Activated CD4-positive, alpha-beta memory T cell treated with anti-CD3 and anti-CD28 coated beads for 36 hours (primary cell): ENCODE measurements at regions of chr3 and their contacts with region 1.

Region 1: GRCh38 chr3:14947886-14948555 is 638 bp downstream of the NR2C2 start:
- DNase-seq: peak; percentile 97
- H3K4me3 Mint-ChIP-seq: peak overlapping the region; percentile 96
- H3K27ac Mint-ChIP-seq: peak overlapping the region; percentile 99
- H3K4me1 Mint-ChIP-seq: peaks cover 50% of the 10 kb centered on the region
- H3K27me3 Mint-ChIP-seq: no peaks in the 10 kb centered on the region

Region 2: GRCh38 chr3:14178247-14179113 is 769.5 kb before region 1 on chr3 and contains the starts of genes LSM3 and XPC:
- CTCF ChIA-PET with region 1: no interaction called
- POLR2A ChIA-PET with region 1: no interaction called
- intact Hi-C with region 1: loop called (anchors 5 kb)
- DNase-seq: peak; percentile 98
- H3K4me3 Mint-ChIP-seq: peak within 1 kb of the TSS; percentile 87
- H3K27ac Mint-ChIP-seq: peak within 1 kb of the TSS; percentile 89
- H3K4me1 Mint-ChIP-seq: peaks cover 63% of the 10 kb centered on the region
- H3K27me3 Mint-ChIP-seq: no peaks in the 10 kb centered on the region
- total RNA-seq, gene LSM3: 22.1 to 22.9 TPM
- total RNA-seq, gene XPC: 27.8 to 31.6 TPM

Region 3: DNA sequence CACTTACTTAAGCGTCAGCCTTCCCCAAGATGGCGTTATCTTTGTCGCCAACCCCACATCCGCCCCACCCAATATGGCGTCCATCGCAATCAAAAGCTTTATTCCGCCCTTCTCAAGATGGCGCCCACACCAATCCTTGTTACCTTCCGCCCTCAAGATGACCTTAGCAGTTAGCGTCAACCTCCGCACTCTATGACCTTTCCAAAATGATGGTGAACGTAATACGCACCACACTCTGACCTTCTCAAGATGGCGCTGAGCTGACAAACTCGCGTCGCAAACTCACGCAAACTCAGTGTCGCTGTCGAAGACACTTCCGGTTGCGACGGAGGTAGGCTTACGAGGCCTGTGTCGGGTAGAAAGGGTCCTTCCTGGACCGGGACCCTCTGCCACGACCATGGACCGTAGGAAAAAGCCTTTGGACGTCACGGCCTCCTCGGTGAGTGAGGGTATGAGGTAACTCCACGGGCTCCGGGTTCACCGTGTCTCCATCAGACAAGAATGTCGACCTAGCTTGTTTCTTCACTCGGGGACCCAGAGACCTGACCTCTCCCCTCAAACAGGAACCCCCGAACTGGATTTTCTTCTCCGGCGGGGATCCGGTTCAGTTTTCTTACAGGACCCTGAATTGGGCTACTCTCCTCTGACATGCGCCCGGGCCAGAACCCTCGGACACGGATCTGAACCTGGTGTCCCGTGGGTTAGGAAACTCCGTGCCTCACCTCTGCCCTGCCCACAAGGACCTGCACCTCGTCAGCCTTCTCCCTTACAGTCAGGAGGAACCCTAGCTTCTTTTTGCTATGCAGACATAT is 296.4 kb before region 1 on chr3 and contains the start of gene CCDC174:
- CTCF ChIA-PET with region 1: no interaction called
- POLR2A ChIA-PET with region 1: interaction called, 8 read pairs
- intact Hi-C with region 1: loop called (anchors 1 kb)
- DNase-seq: peak; percentile 97
- H3K4me3 Mint-ChIP-seq: peak within 1 kb of the TSS; percentile 89
- H3K27ac Mint-ChIP-seq: peak within 1 kb of the TSS; percentile 98
- H3K4me1 Mint-ChIP-seq: peaks cover 35% of the 10 kb centered on the region
- H3K27me3 Mint-ChIP-seq: no peaks in the 10 kb centered on the region
- total RNA-seq, gene CCDC174: 16.6 to 18.6 TPM

Region 4: DNA sequence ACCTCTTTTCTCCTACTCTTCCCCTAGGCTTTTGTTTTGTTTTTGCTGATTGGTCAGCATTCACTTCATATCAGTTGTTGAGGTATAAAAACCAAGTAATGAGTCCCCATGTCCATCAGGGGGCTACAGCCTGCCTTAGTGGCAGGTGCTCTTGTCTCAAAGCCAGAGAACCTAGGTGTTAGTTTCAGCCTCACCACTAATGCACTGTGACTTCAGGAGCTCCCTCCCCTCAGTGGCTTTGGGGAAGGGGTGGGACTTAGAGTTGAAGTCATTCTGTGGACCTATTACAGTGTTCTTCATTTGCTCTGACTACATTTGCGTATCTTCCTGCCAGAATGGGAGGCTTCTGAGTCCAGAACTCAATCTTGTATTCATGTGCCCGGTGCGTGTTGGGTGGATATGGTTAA is 41.0 kb after region 1 on chr3:
- CTCF ChIA-PET with region 1: no interaction called
- POLR2A ChIA-PET with region 1: no interaction called
- intact Hi-C with region 1: no loop called
- DNase-seq: peak; percentile 69
- H3K4me3 Mint-ChIP-seq: no peak overlapping the region
- H3K27ac Mint-ChIP-seq: no peak overlapping the region
- H3K4me1 Mint-ChIP-seq: peaks cover 48% of the 10 kb centered on the region
- H3K27me3 Mint-ChIP-seq: no peaks in the 10 kb centered on the region

Region 5: DNA sequence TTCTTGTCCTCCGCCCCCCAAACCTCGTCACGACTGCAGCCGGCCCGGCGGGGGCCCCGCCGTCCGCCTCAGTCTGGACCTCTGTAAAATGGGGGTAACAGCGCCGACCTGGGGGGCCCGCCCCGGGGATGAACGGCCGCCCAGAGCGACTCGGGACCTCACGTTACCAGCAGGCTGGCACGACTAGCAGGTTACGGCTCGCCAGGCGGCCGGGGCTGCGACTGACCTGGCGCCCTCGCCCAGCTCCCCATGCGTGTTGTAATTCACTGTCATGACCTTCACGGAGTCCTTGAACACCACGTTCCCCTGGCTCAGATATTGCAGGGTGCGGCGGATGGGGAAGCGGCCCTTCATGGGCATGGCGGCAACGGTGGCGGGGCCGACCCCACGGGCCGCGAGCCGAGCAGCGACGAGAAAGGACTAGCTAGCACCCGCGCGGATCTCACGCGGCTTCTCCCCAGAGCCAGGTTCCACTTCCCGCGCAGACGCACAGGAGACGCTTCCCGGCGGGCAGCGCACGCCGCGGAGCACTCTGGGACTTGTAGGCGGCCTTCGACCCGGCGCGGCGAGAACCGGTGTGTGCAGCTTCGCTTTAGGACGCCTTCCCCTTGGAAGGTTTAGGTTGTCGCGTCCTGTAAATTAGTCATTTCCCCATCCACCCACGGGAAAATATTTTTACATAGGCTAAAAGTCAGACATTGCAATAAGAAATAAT is 117.0 kb after region 1 on chr3 and contains the start of gene MRPS25:
- CTCF ChIA-PET with region 1: no interaction called
- POLR2A ChIA-PET with region 1: interaction called, 7 read pairs
- intact Hi-C with region 1: loop called (anchors 1 kb)
- DNase-seq: peak; percentile 95
- H3K4me3 Mint-ChIP-seq: peak within 1 kb of the TSS; percentile 96
- H3K27ac Mint-ChIP-seq: peak within 1 kb of the TSS; percentile 90
- H3K4me1 Mint-ChIP-seq: peaks cover 22% of the 10 kb centered on the region
- H3K27me3 Mint-ChIP-seq: no peaks in the 10 kb centered on the region
- total RNA-seq, gene MRPS25: 53.8 to 58.5 TPM

Region 6: DNA sequence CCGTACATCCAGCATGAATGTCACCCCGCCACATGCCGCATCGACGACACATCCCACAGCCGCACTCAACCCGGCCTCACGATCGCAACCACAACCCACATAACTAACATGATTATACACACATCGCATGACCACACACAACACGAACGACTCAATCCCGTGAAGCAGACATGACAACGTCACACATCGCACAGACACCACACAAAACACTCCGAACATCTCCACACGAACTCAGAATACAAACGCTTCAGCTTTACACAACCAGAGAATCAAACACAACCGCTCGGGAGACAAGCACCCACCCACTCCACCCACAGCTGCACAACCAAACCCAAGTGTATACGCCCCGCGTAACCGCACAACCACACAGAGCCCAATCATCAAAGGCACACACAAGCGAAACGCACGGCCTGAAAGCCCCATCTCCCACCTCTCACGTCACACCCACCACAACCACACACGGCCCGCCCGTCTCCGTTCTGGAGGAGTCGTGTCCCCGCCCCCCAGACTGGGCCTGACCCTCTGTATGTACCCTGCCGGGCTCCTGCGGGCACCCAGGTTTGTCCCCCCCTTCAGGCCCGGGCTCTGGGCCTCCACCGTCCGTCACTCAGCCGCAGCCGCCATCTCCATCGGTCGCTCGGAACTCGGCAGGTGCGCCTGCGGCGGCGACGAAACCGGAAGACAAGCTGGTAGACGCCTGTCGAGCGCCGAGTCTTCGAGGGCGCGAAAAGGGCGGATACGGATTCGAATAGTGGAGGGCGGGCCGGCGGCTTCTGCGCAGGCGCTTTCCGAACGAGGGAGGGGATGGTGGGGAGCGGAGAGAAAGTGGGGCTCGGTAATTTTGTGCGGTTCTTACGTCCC is 150.7 kb after region 1 on chr3 and contains the start of gene RBSN:
- CTCF ChIA-PET with region 1: no interaction called
- POLR2A ChIA-PET with region 1: no interaction called
- intact Hi-C with region 1: loop called (anchors 1 kb)
- DNase-seq: peak; percentile 98
- H3K4me3 Mint-ChIP-seq: peak within 1 kb of the TSS; percentile 94
- H3K27ac Mint-ChIP-seq: peak within 1 kb of the TSS; percentile 94
- H3K4me1 Mint-ChIP-seq: peaks cover 18% of the 10 kb centered on the region
- H3K27me3 Mint-ChIP-seq: no peaks in the 10 kb centered on the region
- total RNA-seq, gene RBSN: 15.0 to 15.3 TPM

Region 7: GRCh38 chr3:15601397-15602145 is 653.5 kb after region 1 on chr3 and contains the starts of genes BTD and HACL1:
- CTCF ChIA-PET with region 1: no interaction called
- POLR2A ChIA-PET with region 1: no interaction called
- intact Hi-C with region 1: loop called (anchors 2 kb)
- DNase-seq: peak; percentile 98
- H3K4me3 Mint-ChIP-seq: peak within 1 kb of the TSS; percentile 99
- H3K27ac Mint-ChIP-seq: peak within 1 kb of the TSS; percentile 94
- H3K4me1 Mint-ChIP-seq: peaks cover 43% of the 10 kb centered on the region
- H3K27me3 Mint-ChIP-seq: no peaks in the 10 kb centered on the region
- total RNA-seq, gene BTD: 8.6 to 8.7 TPM
- total RNA-seq, gene HACL1: 29.9 to 30.0 TPM